ENCODE measurements at regions of chr19 and their contacts with region 1.

Region 1: GRCh38 chr19:3809881-3810707 is 23.9 kb upstream of the MATK start:
- DNase-seq: no peak
- ATAC-seq: no peak
- H3K4me3 Mint-ChIP-seq: no peak overlapping the region
- H3K27ac Mint-ChIP-seq: peak overlapping the region in 3 of 10 donors; percentile 7 to 86 (median 67)
- H3K4me1 Mint-ChIP-seq: peaks cover 20 to 66% (median 52%) of the 10 kb centered on the region in 4 donors
- H3K27me3 Mint-ChIP-seq: no peaks in the 10 kb centered on the region

Region 2: DNA sequence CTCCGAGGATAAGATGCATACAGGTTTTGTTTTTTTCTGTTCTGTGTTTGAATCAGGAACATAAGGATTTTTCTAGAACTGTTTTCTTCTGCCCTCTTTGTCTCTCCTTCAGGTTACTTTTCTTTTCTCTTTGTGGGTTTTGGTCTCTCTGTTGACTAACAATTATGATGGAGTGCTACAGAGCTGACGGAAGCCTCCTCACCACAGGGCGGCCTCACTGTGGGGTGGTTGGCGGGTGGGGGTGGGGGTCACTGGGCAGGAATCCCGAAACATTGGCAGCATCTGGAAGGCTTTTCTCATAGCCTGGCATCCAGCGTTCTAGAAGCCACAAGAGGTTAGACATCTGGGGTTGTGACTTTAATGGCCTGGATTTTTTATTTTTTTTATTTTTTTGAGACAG is 12.0 kb before region 1 on chr19:
- POLR2A ChIA-PET with region 1: interaction called, 13 read pairs
- DNase-seq: peak in 6 of 10 donors; percentile 14 to 68 (median 48)
- ATAC-seq: peak; percentile 49 to 84
- H3K4me3 Mint-ChIP-seq: peak overlapping the region; percentile 2 to 86 (median 58)
- H3K27ac Mint-ChIP-seq: peak overlapping the region; percentile 7 to 95 (median 76)
- H3K4me1 Mint-ChIP-seq: peaks cover 7 to 47% (median 34%) of the 10 kb centered on the region in 4 donors
- H3K27me3 Mint-ChIP-seq: no peaks in the 10 kb centered on the region

Region 3: GRCh38 chr19:3821857-3822364 is 11.8 kb after region 1 on chr19:
- POLR2A ChIA-PET with region 1: interaction called, 10 read pairs
- DNase-seq: peak; percentile 73 to 95 (median 90)
- ATAC-seq: peak; percentile 98 to 99
- H3K4me3 Mint-ChIP-seq: peak overlapping the region in 9 of 10 donors; percentile 16 to 72 (median 53)
- H3K27ac Mint-ChIP-seq: peak overlapping the region in 7 of 10 donors; percentile 13 to 88 (median 71)
- H3K4me1 Mint-ChIP-seq: peaks cover 10 to 32% (median 23%) of the 10 kb centered on the region in 4 donors
- H3K27me3 Mint-ChIP-seq: no peaks in the 10 kb centered on the region

Region 4: DNA sequence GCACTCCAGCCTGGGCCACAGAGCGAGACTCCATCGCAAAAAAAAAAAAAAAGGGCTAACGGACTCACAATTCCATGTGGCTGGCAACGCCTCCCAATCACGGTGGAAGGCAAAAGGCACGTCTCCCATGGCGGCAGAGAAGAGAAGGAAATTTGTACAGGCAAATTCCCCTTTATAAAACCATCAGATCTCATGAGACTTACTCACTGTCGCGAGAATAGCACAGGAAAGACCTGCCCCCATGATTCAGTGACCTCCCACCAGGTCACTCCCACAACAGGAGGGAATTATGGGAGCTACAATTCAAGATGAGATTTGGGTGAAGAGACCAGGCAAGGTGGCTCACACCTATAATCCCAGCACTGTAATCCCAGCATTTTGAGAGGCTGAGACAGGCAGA is 104.1 kb after region 1 on chr19:
- POLR2A ChIA-PET with region 1: no interaction called
- DNase-seq: no peak
- ATAC-seq: no peak
- H3K4me3 Mint-ChIP-seq: no peak overlapping the region
- H3K27ac Mint-ChIP-seq: no peak overlapping the region
- H3K4me1 Mint-ChIP-seq: no peaks in the 10 kb centered on the region
- H3K27me3 Mint-ChIP-seq: peaks cover 0 to 9% (median 7%) of the 10 kb centered on the region in 5 donors